ENCODE measurements at regions of chr14 and their contacts with region 1.

Region 1: DNA sequence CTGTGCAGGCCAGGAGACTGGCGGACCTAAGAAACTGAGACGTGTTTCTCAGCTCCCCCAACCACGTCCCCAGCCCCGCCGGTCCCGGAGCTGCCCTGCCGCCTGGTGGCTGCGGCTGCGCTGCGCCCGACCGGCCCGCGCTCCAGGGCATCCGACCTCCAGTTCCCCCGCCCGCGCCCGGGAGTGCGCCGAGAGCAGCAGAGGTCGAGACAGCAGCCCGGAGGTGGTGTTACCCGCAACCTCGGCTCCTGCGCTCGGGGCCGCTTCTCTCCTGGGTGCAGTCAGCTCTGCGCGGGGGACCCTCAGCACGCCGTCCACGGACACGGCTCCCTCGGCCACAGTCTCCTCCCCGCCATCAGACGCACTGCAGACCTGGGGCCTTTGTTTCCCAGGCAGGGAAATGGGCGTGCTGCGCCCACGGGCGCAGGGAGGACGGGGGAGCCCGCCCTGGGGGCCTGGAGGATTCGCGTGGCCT is 21.6 kb upstream of the GPR132 start:
- DNase-seq: peak; percentile 81
- ATAC-seq: peak; percentile 89
- H3K4me3 Mint-ChIP-seq: peak overlapping the region; percentile 80
- H3K27ac Mint-ChIP-seq: no peak overlapping the region
- H3K4me1 Mint-ChIP-seq: peaks cover 14% of the 10 kb centered on the region
- H3K27me3 Mint-ChIP-seq: peaks cover 6% of the 10 kb centered on the region
- CTCF ChIP-seq: peak; percentile 82

Region 2: GRCh38 chr14:104759001-104759969 is 327.6 kb before region 1 on chr14:
- CTCF ChIA-PET with region 1: no interaction called
- POLR2A ChIA-PET with region 1: interaction called, 11 read pairs
- intact Hi-C with region 1: no loop called
- DNase-seq: no peak
- ATAC-seq: no peak
- H3K4me3 Mint-ChIP-seq: no peak overlapping the region
- H3K27ac Mint-ChIP-seq: no peak overlapping the region
- H3K4me1 Mint-ChIP-seq: peaks cover 14% of the 10 kb centered on the region
- H3K27me3 Mint-ChIP-seq: no peaks in the 10 kb centered on the region
- CTCF ChIP-seq: no peak

Region 3: DNA sequence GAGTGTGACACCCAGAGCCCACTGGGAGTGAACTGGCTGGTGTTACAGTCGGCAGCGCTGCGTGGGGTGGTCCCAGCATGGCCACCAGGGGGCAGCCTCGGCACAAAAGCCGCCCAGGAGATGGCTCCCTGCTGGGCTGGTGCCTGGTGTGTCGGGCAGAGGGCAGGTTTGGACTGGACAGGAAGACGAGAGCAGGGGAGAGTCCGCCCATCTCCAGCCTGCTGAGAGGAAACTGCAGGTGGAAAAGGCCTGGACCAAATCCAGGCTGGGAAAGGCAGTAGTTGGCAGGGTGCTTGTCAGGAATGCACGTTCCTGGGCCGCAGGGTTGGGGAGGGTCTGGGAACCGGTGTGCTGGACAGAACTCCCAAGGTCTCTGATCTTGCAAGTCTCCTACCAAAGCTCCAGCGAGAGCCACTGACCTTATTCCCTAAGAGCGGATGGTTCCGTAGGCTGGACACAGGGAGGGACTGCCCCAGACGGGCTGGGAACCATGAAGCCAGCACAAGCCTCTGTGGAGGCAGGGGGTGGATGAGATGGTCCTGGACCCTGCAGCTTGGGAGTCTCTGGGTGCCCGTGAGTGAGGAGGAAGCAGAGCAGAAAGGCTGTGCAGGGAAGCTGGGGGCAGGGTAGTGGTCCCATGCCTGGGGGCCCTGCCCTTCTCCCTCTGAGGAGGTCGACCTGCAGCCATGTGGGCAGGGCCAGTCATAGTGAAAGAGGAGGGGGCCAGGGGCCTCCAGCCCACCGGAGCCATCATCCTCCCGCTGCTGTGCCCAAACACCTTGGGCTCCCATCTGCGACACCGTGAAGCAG is 110.5 kb before region 1 on chr14:
- CTCF ChIA-PET with region 1: interaction called, 4 read pairs
- POLR2A ChIA-PET with region 1: interaction called, 9 read pairs
- intact Hi-C with region 1: loop called (anchors 1 kb)
- DNase-seq: peak; percentile 86
- ATAC-seq: peak; percentile 85
- H3K4me3 Mint-ChIP-seq: peak overlapping the region; percentile 69
- H3K27ac Mint-ChIP-seq: no peak overlapping the region
- H3K4me1 Mint-ChIP-seq: peaks cover 14% of the 10 kb centered on the region
- H3K27me3 Mint-ChIP-seq: peaks cover 21% of the 10 kb centered on the region
- CTCF ChIP-seq: no peak

Region 4: GRCh38 chr14:105059035-105059924 is 27.6 kb before region 1 on chr14:
- CTCF ChIA-PET with region 1: interaction called, 56 read pairs
- POLR2A ChIA-PET with region 1: interaction called, 32 read pairs
- intact Hi-C with region 1: loop called (anchors 1 kb)
- DNase-seq: no peak
- ATAC-seq: no peak
- H3K4me3 Mint-ChIP-seq: peak overlapping the region; percentile 51
- H3K27ac Mint-ChIP-seq: peak overlapping the region; percentile 89
- H3K4me1 Mint-ChIP-seq: peaks cover 55% of the 10 kb centered on the region
- H3K27me3 Mint-ChIP-seq: no peaks in the 10 kb centered on the region
- CTCF ChIP-seq: no peak

Region 5: GRCh38 chr14:105075379-105076295 is 11.2 kb before region 1 on chr14:
- CTCF ChIA-PET with region 1: interaction called, 18 read pairs
- POLR2A ChIA-PET with region 1: interaction called, 14 read pairs
- intact Hi-C with region 1: loop called (anchors 1 kb)
- DNase-seq: peak; percentile 40
- ATAC-seq: peak; percentile 62
- H3K4me3 Mint-ChIP-seq: no peak overlapping the region
- H3K27ac Mint-ChIP-seq: no peak overlapping the region
- H3K4me1 Mint-ChIP-seq: peaks cover 48% of the 10 kb centered on the region
- H3K27me3 Mint-ChIP-seq: no peaks in the 10 kb centered on the region
- CTCF ChIP-seq: no peak

Region 6: DNA sequence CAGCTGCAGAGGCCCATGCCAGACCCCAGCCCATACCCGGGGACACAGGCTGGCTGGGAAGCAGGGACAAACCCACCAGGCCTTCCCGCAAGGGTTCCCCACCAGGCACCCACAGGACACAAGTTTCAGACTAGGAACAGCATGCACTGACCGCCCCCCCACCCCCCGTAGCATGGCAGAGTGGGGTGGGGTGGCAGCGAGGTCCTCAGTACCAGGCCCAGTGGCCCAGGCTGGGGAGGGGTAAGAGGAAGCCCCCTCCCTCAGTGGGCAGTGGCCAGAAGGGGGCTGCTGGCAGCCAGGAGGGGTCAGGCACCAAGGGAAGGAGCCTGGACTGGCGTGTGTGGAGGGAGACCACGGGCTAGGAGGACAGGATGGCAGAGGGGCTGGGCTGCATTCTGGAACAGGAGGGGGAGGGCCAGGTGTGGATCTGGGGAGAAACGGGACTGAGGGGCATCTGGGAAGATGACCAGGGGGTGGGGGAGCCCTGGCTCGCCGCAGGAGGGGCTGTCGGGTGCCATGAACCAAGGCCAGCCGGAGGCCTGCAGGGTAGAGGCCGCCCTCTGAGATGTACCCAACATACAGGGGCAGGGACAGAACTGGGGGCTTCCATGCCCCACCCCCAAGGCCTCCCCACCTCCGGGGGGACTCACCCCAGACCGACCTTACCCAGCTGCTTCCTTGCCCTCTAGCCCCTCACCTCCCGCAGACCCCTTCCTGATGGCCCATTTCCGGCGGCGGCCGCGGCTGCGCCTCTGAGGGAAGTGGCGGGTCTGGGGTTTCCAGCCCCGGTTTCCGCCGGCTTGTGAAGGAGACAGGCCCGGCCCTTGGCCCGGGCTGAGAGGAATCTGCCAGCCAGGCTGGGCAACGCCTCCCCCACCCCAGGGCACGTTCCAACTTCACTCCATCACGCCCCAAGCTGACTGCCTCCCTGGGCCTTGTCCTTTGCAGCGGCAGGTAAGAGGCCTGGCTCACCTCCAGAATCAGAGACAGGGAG is 87.3 kb after region 1 on chr14:
- CTCF ChIA-PET with region 1: no interaction called
- POLR2A ChIA-PET with region 1: no interaction called
- intact Hi-C with region 1: no loop called
- DNase-seq: no peak
- ATAC-seq: peak; percentile 55
- H3K4me3 Mint-ChIP-seq: no peak overlapping the region
- H3K27ac Mint-ChIP-seq: no peak overlapping the region
- H3K4me1 Mint-ChIP-seq: peaks cover 17% of the 10 kb centered on the region
- H3K27me3 Mint-ChIP-seq: peaks cover 13% of the 10 kb centered on the region
- CTCF ChIP-seq: no peak

Region 7: GRCh38 chr14:105203057-105203531 is 116.2 kb after region 1 on chr14:
- CTCF ChIA-PET with region 1: no interaction called
- POLR2A ChIA-PET with region 1: no interaction called
- intact Hi-C with region 1: loop called (anchors 2 kb)
- DNase-seq: peak; percentile 69
- ATAC-seq: peak; percentile 54
- H3K4me3 Mint-ChIP-seq: no peak overlapping the region
- H3K27ac Mint-ChIP-seq: no peak overlapping the region
- H3K4me1 Mint-ChIP-seq: peaks cover 15% of the 10 kb centered on the region
- H3K27me3 Mint-ChIP-seq: peaks cover 23% of the 10 kb centered on the region
- CTCF ChIP-seq: peak; percentile 76

Region 8: GRCh38 chr14:105527661-105528581 is 441.1 kb after region 1 on chr14:
- CTCF ChIA-PET with region 1: interaction called, 4 read pairs
- POLR2A ChIA-PET with region 1: no interaction called
- intact Hi-C with region 1: loop called (anchors 1 kb)
- DNase-seq: peak; percentile 82
- ATAC-seq: peak; percentile 47
- H3K4me3 Mint-ChIP-seq: peak overlapping the region; percentile 68
- H3K27ac Mint-ChIP-seq: no peak overlapping the region
- H3K4me1 Mint-ChIP-seq: peaks cover 44% of the 10 kb centered on the region
- H3K27me3 Mint-ChIP-seq: peaks cover 4% of the 10 kb centered on the region
- CTCF ChIP-seq: no peak